ENCODE measurements at regions of chr4 and their contacts with region 1.

Region 1: GRCh38 chr4:27000820-27001219 is 140.2 kb downstream of the STIM2 start:
- DNase-seq: peak; percentile 70
- H3K4me3 Mint-ChIP-seq: no peak overlapping the region
- H3K27ac Mint-ChIP-seq: no peak overlapping the region
- H3K4me1 Mint-ChIP-seq: peaks cover 36% of the 10 kb centered on the region
- H3K27me3 Mint-ChIP-seq: no peaks in the 10 kb centered on the region

Region 2: DNA sequence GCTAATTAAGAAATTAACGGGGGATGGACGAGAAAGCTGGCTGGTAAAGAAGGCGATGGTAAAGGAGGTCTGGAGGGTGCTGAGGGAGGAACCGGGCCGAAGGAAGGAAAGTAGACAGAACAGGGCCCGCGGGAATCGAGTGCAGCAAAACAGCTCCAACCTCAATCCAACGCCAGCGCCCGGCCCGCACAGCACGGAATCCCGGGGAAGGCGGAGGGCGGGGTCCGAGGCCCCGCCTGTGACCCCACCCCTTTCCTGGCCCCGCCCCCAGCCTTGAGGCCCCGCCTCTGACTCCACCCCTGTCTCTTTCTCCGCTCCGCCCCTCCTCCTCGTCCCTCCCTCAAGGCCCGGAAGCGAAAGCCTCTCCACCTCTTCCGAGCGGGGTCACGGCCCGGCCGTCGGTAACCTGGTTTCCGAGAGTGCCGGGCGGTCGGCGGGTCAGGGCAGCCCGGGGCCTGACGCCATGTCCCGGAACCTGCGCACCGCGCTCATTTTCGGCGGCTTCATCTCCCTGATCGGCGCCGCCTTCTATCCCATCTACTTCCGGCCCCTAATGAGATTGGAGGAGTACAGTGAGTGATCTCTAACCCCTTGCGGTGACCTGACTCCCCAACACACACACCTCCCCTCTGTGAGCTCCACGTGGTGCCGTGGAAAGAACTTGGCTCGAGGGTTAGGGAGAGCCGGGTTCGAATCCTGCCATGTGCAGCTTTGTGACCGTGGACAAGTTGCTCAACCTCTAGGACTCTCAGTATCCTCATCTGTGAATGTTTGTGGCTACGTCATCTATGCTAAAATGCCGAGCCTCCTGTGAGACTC is 1086.8 kb before region 1 on chr4 and contains the start of gene SMIM20:
- intact Hi-C with region 1: loop called (anchors 10 kb)
- DNase-seq: peak; percentile 96
- H3K4me3 Mint-ChIP-seq: peak within 1 kb of the TSS; percentile 96
- H3K27ac Mint-ChIP-seq: peak within 1 kb of the TSS; percentile 99
- H3K4me1 Mint-ChIP-seq: peaks cover 17% of the 10 kb centered on the region
- H3K27me3 Mint-ChIP-seq: peaks cover 9% of the 10 kb centered on the region
- total RNA-seq, gene SMIM20: 17.0 and 18.9 TPM in 2 replicates

Region 3: GRCh38 chr4:26583865-26584652 is 416.8 kb before region 1 on chr4 and contains the start of gene TBC1D19:
- intact Hi-C with region 1: loop called (anchors 5 kb)
- DNase-seq: peak; percentile 96
- H3K4me3 Mint-ChIP-seq: peak within 1 kb of the TSS; percentile 98
- H3K27ac Mint-ChIP-seq: peak within 1 kb of the TSS; percentile 95
- H3K4me1 Mint-ChIP-seq: peaks cover 27% of the 10 kb centered on the region
- H3K27me3 Mint-ChIP-seq: no peaks in the 10 kb centered on the region
- total RNA-seq, gene TBC1D19: 3.3 and 3.6 TPM in 2 replicates

Region 4: GRCh38 chr4:26692014-26692726 is 308.6 kb before region 1 on chr4:
- intact Hi-C with region 1: no loop called
- DNase-seq: no peak
- H3K4me3 Mint-ChIP-seq: no peak overlapping the region
- H3K27ac Mint-ChIP-seq: no peak overlapping the region
- H3K4me1 Mint-ChIP-seq: no peaks in the 10 kb centered on the region
- H3K27me3 Mint-ChIP-seq: no peaks in the 10 kb centered on the region

Region 5: GRCh38 chr4:26746802-26747213 is 254.0 kb before region 1 on chr4:
- intact Hi-C with region 1: loop called (anchors 5 kb)
- DNase-seq: peak; percentile 69
- H3K4me3 Mint-ChIP-seq: no peak overlapping the region
- H3K27ac Mint-ChIP-seq: no peak overlapping the region
- H3K4me1 Mint-ChIP-seq: peaks cover 13% of the 10 kb centered on the region
- H3K27me3 Mint-ChIP-seq: peaks cover 17% of the 10 kb centered on the region

Region 6: DNA sequence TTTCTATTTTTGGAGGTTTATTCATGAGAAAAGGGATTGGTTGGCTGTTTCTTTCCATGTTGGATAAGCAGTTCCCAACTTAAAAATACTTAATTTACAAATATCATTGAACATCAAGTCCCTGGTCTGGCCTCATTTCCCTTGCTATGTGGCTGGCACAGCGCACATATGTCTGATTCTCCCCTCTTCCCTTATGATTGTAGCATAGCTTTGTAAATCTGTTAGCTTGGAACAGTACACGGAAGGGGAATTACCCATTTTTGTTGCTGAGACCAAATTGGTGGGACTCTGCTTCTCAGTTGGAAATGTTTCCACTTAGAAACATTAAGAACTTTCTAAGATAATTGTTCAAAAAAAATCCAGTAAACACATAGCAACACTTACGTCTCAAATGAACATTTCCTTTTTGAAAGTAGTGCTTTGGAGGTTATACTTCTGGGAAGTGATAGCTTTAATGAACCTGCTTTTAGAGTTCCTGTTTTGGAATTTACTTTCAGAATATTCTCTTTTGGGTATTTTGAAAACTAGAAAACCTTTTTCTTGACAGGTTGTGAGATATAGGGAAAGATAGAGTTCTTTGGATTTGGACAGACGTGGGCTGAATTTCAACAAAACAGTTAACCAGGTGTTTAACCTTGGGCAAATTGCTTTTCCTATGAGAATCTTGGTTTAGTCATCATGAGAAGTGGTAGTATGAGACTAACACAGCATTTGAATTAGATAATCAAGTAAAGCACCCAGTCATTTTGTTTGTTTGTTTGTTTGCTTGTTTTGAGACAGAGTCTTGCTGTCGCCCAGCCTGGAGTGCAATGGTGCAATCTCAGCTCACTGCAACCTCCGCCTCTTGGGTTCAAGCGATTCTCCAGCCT is 92.9 kb before region 1 on chr4:
- intact Hi-C with region 1: loop called (anchors 5 kb)
- DNase-seq: no peak
- H3K4me3 Mint-ChIP-seq: peak overlapping the region; percentile 37
- H3K27ac Mint-ChIP-seq: peak overlapping the region; percentile 81
- H3K4me1 Mint-ChIP-seq: peaks cover 55% of the 10 kb centered on the region
- H3K27me3 Mint-ChIP-seq: no peaks in the 10 kb centered on the region

Region 7: DNA sequence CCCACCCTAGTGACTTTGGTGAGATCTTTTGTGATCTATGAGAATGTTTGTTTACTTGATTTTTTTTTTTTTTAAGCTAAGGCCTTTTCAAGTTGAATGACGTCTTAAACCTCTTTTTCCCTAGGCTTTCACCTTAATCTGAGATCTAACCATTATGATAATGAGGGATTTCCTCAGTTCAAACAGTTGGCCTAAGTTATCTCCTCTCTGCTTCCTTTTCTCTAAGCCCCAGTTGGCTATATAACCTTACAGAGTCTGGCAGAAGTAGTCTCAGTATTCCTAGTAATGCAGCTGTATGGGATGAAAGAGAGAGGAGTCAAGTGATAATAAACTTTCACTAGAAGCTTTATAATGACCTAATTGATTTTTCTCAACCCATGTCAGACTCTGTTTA is 41.2 kb before region 1 on chr4:
- intact Hi-C with region 1: loop called (anchors 1 kb)
- DNase-seq: no peak
- H3K4me3 Mint-ChIP-seq: peak overlapping the region; percentile 20
- H3K27ac Mint-ChIP-seq: peak overlapping the region; percentile 71
- H3K4me1 Mint-ChIP-seq: peaks cover 33% of the 10 kb centered on the region
- H3K27me3 Mint-ChIP-seq: no peaks in the 10 kb centered on the region

Region 8: GRCh38 chr4:26985873-26986272 is 14.9 kb before region 1 on chr4:
- intact Hi-C with region 1: loop called (anchors 2 kb)
- DNase-seq: peak; percentile 87
- H3K4me3 Mint-ChIP-seq: peak overlapping the region; percentile 35
- H3K27ac Mint-ChIP-seq: peak overlapping the region; percentile 60
- H3K4me1 Mint-ChIP-seq: peaks cover 30% of the 10 kb centered on the region
- H3K27me3 Mint-ChIP-seq: no peaks in the 10 kb centered on the region

Region 9: GRCh38 chr4:27251771-27252170 is 251.0 kb after region 1 on chr4:
- intact Hi-C with region 1: no loop called
- DNase-seq: no peak
- H3K4me3 Mint-ChIP-seq: no peak overlapping the region
- H3K27ac Mint-ChIP-seq: no peak overlapping the region
- H3K4me1 Mint-ChIP-seq: no peaks in the 10 kb centered on the region
- H3K27me3 Mint-ChIP-seq: no peaks in the 10 kb centered on the region

Measured in activated CD4-positive, alpha-beta T cell treated with anti-CD3 and anti-CD28 coated beads, Interleukin-2, amount 10 ng/mL, durations not matched to agents 24 days and 14 days (primary cell).